ENCODE measurements at regions of chr1 and their contacts with region 1.

Region 1: GRCh38 chr1:115166531-115167091 is 77.3 kb upstream of the TSPAN2 start:
- DNase-seq: peak in 1 of 2 donors; percentile 43
- H3K4me3 ChIP-seq: no peak overlapping the region
- H3K27ac ChIP-seq: no peak overlapping the region
- H3K4me1 ChIP-seq: peaks cover 23% of the 10 kb centered on the region
- H3K27me3 ChIP-seq: no peaks in the 10 kb centered on the region
- CTCF ChIP-seq: no peak
- POLR2A ChIP-seq: no peak

Region 2: DNA sequence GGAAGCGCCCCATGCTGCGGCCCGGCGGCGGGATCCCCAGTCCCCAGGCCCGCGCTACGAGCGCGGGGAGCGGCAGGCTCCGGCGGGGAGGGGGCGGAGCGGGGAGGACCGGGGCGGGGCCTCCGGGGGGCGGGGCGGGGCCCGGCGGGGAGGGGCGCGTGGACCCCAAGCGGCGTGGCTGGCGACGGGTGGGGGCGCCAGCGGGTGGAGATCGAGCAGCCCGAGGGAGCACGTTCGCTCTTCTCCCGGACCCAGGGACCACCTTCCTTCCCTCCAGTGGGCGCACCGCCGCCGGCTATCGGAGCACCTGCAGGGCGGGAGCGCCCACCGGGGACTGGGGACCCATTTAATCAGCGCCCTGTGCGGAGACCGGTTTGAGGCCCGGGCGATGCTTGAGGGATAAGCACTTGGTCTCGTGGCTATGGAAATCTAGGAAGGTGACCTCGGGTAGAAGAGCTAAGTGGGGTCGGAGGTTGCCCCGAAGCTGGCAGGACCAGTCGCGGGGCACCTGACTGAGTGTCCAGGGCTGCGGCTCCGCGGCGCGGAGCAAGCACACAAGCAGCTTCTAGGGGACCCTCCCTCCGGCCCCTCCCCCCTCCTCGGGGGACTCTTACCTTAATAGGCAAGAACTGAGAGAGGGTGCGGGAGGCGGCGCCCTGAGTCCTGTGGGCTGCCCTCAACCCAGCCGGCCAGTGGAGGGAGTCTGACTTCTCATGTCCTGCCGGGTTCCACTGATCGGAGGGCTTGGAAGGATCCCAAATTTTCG is 77.0 kb before region 1 on chr1 and contains the start of gene TSPAN2:
- intact Hi-C with region 1: no loop called
- DNase-seq: no peak
- H3K4me3 ChIP-seq: peak within 1 kb of the TSS; percentile 60 to 65
- H3K27ac ChIP-seq: peak within 1 kb of the TSS; percentile 71
- H3K4me1 ChIP-seq: peaks cover 18% of the 10 kb centered on the region
- H3K27me3 ChIP-seq: no peaks in the 10 kb centered on the region
- CTCF ChIP-seq: no peak
- POLR2A ChIP-seq: peak in 1 of 2 donors; percentile 8
- total RNA-seq, gene TSPAN2: 10.6 TPM

Region 3: DNA sequence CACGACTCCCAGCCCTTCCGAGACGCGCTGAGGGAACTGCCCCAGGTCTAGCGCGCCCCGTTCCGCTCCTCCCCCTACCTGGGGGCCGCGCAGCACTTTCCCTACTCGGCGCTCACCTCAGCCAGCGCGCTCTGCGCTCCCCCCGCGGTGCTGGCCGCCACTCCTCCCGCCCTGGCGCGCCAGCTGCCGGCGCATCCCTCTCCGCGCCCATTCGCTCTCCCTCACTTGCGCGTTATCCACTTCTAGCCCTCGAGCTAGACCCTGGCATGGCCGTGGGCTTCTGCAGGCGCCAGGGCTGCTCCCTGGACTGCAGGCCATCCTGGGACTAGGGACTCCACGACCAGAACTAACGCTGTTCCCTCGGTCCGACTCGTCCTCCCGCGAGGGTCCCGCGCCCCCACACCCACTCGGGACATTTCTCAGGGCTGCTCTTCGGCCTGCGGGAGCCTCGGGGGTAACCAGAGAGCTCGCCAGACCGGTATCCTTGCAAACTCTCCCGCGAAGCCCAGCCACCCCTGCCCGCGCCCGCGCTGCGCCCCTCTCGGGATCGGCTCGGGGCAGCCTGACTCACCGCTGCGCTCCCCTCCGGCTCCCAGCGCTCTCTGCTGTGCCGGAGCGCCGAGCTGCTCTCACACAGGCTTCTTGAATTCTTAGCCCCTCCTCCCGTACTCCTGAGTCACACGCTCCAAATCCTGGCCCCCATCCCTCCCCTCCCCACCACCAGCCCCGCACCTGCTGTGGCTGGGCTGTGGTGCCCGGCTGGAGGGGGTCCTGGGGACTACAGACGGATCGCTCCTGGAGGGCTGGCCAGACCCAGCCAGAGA is 171.2 kb after region 1 on chr1 and contains the start of gene NGF:
- intact Hi-C with region 1: loop called (anchors 10 kb)
- DNase-seq: no peak
- H3K4me3 ChIP-seq: peak within 1 kb of the TSS; percentile 62 to 64
- H3K27ac ChIP-seq: peak within 1 kb of the TSS; percentile 72
- H3K4me1 ChIP-seq: peaks cover 35% of the 10 kb centered on the region
- H3K27me3 ChIP-seq: no peaks in the 10 kb centered on the region
- CTCF ChIP-seq: no peak
- POLR2A ChIP-seq: peak in 1 of 2 donors; percentile 40
- total RNA-seq, gene NGF: 2.7 TPM

Measured in vagina (tissue), 2 donors.